ENCODE measurements at regions of chr7 and their contacts with region 1.

Region 1: DNA sequence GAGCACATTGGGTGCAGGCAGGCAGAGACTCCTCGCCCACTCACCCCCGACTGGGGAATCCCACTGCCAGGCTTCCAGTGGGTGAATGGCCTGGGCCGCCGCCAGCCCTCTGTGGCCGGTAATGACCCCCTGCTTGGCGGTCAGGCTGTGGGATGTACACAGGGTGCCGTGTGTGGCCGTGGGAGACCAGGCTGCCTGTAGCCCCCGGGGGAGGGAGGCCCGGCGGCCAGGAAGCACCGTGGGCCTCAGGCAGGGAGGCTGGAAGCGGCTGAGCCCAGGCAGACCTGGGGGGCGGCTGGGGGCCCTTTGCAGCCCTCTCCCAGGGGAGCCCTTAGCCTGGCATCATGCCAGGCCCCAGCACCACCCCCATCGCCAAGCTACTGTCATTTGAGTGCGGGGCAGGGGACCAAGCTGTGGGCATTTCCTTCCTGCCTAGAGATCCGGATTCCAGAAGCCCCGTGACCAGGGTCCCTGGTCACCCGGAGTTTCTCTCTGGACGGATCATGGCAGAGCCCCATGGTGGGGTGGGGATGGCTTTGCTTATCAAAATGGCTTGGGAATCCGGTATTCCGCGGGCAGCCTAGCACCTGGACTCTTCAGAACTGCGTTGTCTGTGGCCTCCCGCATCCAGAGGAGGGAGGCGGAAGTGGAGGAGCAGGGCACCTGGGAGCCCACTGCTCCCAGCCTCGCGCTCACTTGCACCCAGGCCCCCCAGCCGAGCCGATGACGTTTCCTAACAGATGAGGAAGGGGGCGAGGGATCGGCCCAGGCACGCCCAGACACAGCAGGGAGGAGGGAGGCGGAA is 1.1 kb downstream of the TTYH3 start:
- DNase-seq: no peak
- H3K4me3 ChIP-seq: peak overlapping the region; percentile 99
- H3K4me3 Mint-ChIP-seq: peak overlapping the region; percentile 93
- H3K27ac Mint-ChIP-seq: peak overlapping the region; percentile 64
- H3K4me1 ChIP-seq: peaks cover 28% of the 10 kb centered on the region
- H3K4me1 Mint-ChIP-seq: peaks cover 6% of the 10 kb centered on the region
- H3K27me3 ChIP-seq: no peaks in the 10 kb centered on the region
- H3K27me3 Mint-ChIP-seq: no peaks in the 10 kb centered on the region
- CTCF ChIP-seq: no peak

Region 2: DNA sequence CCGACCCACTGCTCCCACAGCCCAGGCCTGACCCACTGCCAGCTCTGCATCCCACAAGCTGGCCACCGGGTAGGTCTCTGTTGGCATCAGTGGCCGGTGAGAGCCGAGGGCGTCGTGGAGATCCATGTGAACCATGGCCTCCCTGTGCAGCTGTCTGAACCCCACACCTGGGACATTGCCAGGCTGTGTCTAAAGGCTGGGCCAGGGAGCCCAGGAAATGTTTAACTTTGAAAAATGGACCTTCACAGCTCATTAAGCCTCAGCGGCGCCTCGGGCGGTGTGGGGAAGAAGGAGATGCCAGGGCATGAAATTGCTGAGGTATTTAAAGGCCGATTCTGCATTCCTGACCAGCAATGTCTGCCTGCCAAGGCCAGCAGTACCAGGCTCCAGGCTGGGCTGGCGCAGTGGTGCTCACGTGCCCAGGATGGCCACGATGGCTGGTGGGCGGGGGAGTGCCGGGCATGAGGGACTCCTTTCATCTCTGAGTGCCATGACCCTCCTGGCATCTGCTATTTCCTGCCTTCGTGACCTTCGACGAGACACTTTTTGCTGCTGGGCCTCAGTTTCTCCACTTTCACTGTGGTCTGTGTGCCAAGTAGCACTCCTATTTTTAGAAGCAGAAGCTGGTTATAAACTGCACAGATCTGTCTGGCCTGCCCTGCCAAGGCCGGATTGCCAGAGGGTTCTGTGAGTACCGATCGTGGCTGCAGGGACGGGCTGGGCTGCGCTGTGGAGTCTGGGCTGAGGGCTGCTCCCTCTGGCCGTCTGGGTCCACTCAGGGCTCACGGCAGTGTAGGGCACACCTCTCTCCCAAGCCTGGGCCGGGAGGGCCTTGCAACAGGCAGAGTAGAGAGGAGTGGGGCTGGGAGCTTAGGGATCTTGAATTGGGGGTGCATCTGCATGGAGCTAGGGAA is 941.1 kb before region 1 on chr7:
- CTCF ChIA-PET with region 1: no interaction called
- POLR2A ChIA-PET with region 1: no interaction called
- intact Hi-C with region 1: no loop called
- DNase-seq: peak in 1 of 2 experiments; percentile 26
- H3K4me3 ChIP-seq: no peak overlapping the region
- H3K4me3 Mint-ChIP-seq: no peak overlapping the region
- H3K27ac Mint-ChIP-seq: no peak overlapping the region
- H3K4me1 ChIP-seq: no peaks in the 10 kb centered on the region
- H3K4me1 Mint-ChIP-seq: no peaks in the 10 kb centered on the region
- H3K27me3 ChIP-seq: no peaks in the 10 kb centered on the region
- H3K27me3 Mint-ChIP-seq: peaks cover 21% of the 10 kb centered on the region
- CTCF ChIP-seq: no peak

Region 3: DNA sequence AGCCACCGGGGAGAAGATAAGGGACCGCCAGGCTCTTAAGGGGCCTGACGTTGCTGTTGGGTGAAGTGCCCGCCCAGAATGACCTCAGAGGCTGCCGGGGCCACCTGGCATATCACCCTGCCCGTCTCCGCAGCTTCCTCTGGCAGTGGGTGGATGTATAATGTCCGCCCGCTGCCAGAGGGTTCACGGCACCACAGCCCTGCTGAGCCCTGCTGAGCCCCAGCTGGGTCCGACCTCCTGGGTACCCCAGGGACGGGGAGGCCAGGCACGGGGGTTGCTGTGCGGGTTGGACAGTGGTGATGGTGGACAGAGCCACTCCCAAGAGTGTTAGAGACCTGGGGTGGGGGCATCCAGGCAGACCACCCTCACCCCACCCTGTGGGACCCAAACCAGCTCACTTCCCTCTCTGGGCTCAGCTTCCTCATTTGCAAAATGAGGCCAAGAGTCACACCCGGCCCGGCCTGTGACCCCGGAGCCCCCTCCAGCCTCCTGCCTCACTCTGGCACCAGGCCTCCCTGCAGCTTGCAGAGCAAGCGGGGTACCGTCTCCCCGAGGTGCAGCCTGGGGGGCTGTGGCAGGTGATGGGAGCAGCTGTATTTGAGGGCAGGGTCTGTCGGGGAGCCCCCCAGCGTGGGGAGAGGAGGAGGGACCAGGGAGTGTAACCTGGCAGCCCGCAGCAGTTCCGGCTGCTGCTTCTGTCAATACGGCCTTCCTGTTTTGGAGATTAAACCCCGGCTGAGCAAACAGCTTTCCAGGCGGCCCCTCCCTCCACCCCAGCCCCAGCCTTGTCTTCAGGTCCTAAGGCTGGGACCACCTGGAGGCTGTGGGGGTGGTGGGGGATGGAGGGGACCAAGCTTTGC is 121.8 kb before region 1 on chr7:
- CTCF ChIA-PET with region 1: interaction called, 12 read pairs
- POLR2A ChIA-PET with region 1: no interaction called
- intact Hi-C with region 1: no loop called
- DNase-seq: peak in 1 of 2 experiments; percentile 54
- H3K4me3 ChIP-seq: no peak overlapping the region; the same call in 1 of the 2 replicates
- H3K4me3 Mint-ChIP-seq: no peak overlapping the region
- H3K27ac Mint-ChIP-seq: no peak overlapping the region
- H3K4me1 ChIP-seq: peaks cover 13% of the 10 kb centered on the region
- H3K4me1 Mint-ChIP-seq: no peaks in the 10 kb centered on the region
- H3K27me3 ChIP-seq: no peaks in the 10 kb centered on the region
- H3K27me3 Mint-ChIP-seq: no peaks in the 10 kb centered on the region
- CTCF ChIP-seq: no peak

Region 4: DNA sequence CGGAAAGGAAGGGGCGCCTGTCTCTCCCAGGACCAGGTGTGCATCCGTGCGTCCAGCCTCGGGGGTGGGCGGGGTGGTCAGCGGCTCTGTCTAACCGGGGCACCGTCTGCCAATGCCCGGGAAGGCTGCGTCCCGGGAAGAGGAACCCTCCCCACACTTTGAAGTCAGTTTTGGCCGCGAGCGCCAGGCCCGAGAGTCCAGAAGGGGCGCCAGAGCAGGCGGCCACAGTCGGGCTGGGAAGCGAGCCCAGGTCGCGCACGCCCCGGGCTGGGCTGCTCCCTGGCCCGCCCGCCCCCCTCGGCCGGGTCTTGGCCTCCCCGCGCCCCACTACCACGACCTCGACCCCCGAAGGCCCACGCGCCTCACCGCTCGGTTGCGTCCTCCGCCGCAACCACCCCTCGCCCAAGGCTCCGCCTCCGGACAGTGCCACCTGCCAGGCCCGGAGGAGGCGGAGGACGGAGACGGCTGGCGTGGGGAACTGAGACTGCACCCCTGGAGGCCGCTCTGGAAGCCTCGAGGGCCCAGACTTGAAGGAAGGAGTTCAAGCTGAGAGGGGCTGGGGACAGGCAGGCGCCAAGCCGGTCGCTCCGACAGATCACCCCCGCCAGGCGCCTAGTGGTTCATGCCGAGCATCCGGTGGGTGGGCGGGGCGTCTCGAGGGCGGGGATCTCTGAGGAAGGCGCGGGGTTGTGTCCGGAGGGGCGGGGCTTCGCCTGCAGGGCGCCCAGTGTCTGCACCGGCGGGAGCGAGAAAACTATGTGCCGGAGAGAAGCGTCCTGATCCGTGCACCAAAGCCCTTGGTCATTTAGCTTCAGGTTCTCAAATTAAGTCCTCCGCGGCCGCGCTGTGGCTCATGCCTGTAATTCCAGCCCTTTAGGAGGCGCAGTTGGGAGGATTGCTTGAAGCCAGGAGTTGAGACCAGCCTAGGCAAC is 77.5 kb before region 1 on chr7 and contains the start of gene BRAT1:
- CTCF ChIA-PET with region 1: interaction called, 3 read pairs
- POLR2A ChIA-PET with region 1: no interaction called
- intact Hi-C with region 1: loop called (anchors 5 kb)
- DNase-seq: peak; percentile 97 to 98
- H3K4me3 ChIP-seq: peak within 1 kb of the TSS; percentile 93
- H3K4me3 Mint-ChIP-seq: peak within 1 kb of the TSS; percentile 84
- H3K27ac Mint-ChIP-seq: peak within 1 kb of the TSS; percentile 89
- H3K4me1 ChIP-seq: peaks cover 7% of the 10 kb centered on the region
- H3K4me1 Mint-ChIP-seq: peaks cover 5% of the 10 kb centered on the region
- H3K27me3 ChIP-seq: no peaks in the 10 kb centered on the region
- H3K27me3 Mint-ChIP-seq: no peaks in the 10 kb centered on the region
- CTCF ChIP-seq: peak; percentile 45 to 69
- total RNA-seq, gene BRAT1: 33.2 and 33.5 TPM in 2 replicates

Region 5: DNA sequence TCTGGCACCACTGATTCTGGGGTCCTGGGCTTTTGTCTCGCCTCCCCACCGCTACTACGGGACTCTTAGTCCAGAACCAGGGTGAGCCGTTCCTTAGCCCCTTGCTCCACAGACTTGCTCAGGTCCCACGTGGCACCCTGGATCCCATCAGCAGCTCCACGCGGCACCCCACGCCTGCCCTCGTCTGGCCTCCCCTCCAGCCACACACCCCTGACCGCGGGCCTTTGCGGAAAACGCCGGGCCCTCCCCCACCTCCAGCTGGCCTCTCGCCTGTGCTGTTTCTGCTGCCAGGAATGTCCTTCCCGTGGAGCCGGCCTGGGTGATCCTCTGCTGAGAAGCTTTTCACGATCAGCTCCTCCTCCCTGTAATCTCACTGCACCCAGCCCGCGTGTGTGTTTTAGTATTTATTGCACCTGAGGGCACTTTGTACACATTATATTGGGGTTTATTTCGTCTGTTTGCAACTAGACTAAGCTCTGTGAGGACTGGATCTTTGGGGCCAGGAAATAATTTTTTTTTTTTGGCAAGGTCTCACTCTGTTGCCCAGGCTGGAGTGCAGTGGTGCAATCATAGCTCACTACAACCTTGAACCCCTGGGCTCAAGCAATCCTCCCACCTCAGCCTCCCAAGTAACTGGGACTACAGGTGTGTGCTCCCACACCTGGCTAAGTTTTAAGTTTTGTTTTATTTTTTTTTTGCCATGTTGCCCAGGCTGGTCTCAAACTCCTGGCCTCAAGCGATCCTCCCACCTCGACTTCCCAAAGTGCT is 11.7 kb before region 1 on chr7:
- CTCF ChIA-PET with region 1: interaction called, 10 read pairs
- POLR2A ChIA-PET with region 1: interaction called, 16 read pairs
- intact Hi-C with region 1: no loop called
- DNase-seq: peak; percentile 57 to 84
- H3K4me3 ChIP-seq: peak overlapping the region; percentile 20
- H3K4me3 Mint-ChIP-seq: peak overlapping the region; percentile 29
- H3K27ac Mint-ChIP-seq: peak overlapping the region; percentile 69
- H3K4me1 ChIP-seq: peaks cover 36% of the 10 kb centered on the region
- H3K4me1 Mint-ChIP-seq: peaks cover 13% of the 10 kb centered on the region
- H3K27me3 ChIP-seq: no peaks in the 10 kb centered on the region
- H3K27me3 Mint-ChIP-seq: no peaks in the 10 kb centered on the region
- CTCF ChIP-seq: no peak

Region 6: GRCh38 chr7:2737771-2738540 is 105.0 kb after region 1 on chr7:
- CTCF ChIA-PET with region 1: no interaction called
- POLR2A ChIA-PET with region 1: interaction called, 21 read pairs
- intact Hi-C with region 1: no loop called
- DNase-seq: peak in 1 of 2 experiments; percentile 10
- H3K4me3 ChIP-seq: no peak overlapping the region
- H3K4me3 Mint-ChIP-seq: no peak overlapping the region
- H3K27ac Mint-ChIP-seq: no peak overlapping the region
- H3K4me1 ChIP-seq: peaks cover 15% of the 10 kb centered on the region
- H3K4me1 Mint-ChIP-seq: peaks cover 8% of the 10 kb centered on the region
- H3K27me3 ChIP-seq: no peaks in the 10 kb centered on the region
- H3K27me3 Mint-ChIP-seq: no peaks in the 10 kb centered on the region
- CTCF ChIP-seq: no peak

Region 7: GRCh38 chr7:3300651-3301378 is 667.9 kb after region 1 on chr7 and contains the start of gene SDK1:
- CTCF ChIA-PET with region 1: no interaction called
- POLR2A ChIA-PET with region 1: no interaction called
- intact Hi-C with region 1: loop called (anchors 10 kb)
- DNase-seq: peak; percentile 85 to 95
- H3K4me3 ChIP-seq: peak within 1 kb of the TSS; percentile 63
- H3K4me3 Mint-ChIP-seq: peak within 1 kb of the TSS; percentile 67
- H3K27ac Mint-ChIP-seq: no peak within 1 kb of the TSS
- H3K4me1 ChIP-seq: no peaks in the 10 kb centered on the region
- H3K4me1 Mint-ChIP-seq: no peaks in the 10 kb centered on the region
- H3K27me3 ChIP-seq: no peaks in the 10 kb centered on the region; the same call in 1 of the 2 replicates
- H3K27me3 Mint-ChIP-seq: no peaks in the 10 kb centered on the region
- CTCF ChIP-seq: peak; percentile 65 to 86
- total RNA-seq, gene SDK1: 6.2 and 7.1 TPM in 2 replicates

Region 8: DNA sequence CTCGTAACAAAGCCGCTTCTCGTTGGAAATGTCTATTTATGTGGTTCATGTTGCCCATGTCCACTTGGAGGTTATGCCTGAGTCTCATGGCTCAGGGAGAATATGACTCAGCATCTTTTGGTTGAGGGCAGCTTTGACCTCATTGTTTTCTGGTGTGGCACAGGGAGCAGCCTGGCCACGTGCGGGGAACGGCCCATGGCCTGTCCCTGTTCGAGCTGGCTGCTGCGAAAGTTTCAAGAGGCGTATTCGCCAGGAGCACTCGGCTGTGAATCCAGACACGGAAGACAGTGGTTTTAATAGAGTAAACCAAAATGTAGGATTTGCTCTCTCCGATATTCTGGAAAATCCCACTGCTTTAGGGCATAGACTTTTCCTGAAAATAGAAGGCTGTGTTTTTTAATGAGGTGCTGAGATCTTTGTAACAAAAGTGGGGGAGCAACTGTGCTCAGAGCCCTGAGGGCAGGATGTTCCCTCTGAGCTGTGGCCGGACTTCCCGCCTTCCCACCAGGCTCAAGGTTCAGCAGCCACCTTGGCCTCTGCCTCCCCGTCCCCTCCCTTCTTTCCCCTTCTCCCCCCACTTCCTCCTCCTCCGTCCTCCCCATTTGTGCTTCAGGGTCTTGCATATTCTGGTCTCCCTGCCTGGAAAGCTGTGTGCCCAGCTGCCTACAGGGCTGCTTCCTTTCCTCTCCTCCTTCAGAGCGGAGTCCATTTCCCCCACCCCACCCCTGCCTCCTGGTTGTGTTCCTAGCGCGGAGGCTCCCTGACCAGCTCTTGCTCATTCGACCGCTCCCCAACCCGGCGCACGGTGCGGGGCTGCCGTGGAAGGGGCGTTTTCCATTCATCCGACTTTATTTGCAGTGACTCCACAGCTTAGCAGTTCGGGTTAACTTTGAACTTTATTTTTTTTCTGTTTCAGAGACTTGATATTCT is 1310.1 kb after region 1 on chr7:
- CTCF ChIA-PET with region 1: no interaction called
- POLR2A ChIA-PET with region 1: interaction called, 10 read pairs
- intact Hi-C with region 1: no loop called
- DNase-seq: no peak
- H3K4me3 ChIP-seq: no peak overlapping the region
- H3K4me3 Mint-ChIP-seq: no peak overlapping the region
- H3K27ac Mint-ChIP-seq: no peak overlapping the region
- H3K4me1 ChIP-seq: no peaks in the 10 kb centered on the region
- H3K4me1 Mint-ChIP-seq: no peaks in the 10 kb centered on the region
- H3K27me3 ChIP-seq: no peaks in the 10 kb centered on the region
- H3K27me3 Mint-ChIP-seq: no peaks in the 10 kb centered on the region
- CTCF ChIP-seq: no peak